ENCODE measurements at regions of chr1 and their contacts with region 1.

Region 1: DNA sequence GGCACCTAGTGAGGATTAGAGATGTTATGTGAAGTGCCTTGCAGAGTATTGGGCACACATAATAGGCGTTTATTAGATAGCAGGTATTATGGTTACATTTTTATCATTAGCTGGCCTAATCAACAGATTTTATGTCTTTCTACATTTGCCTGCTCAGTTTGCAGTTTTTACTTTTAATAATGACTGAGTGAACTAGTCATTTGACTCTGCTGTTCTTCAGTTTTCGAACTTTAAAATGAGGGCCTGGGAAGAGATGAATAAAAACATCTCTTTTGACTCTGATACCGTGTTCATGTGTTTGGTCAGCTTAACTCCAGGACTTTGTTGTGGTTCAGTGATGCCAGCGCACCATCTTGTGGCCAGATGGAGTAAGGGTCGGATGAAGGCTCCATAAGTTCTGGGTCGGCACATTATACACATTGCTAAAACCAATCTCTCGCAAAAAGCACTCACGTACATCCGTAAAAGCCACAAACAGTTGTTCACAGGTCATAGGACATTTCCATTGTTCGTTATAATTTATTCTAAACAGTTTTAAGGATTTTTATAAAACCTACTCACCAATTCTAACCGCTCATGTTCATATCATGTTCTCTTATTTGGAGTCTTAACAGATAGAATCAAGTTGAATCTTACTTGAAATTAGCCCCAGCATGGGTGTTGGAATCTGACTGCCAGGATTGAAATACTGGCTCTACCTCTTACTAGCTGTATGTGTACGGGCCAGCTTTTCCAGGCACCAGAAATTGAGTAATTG is 78.4 kb upstream of the GPR88 start:
- DNase-seq: peak; percentile 41 to 86 (median 62)
- ATAC-seq: peak; percentile 61
- H3K4me3 ChIP-seq: no peak overlapping the region
- H3K4me3 Mint-ChIP-seq: peak overlapping the region; percentile 62
- H3K27ac ChIP-seq: no peak overlapping the region
- H3K27ac Mint-ChIP-seq: peak overlapping the region; percentile 33
- H3K4me1 ChIP-seq: peaks cover 23% of the 10 kb centered on the region
- H3K4me1 Mint-ChIP-seq: peaks cover 83% of the 10 kb centered on the region
- H3K27me3 ChIP-seq: no peaks in the 10 kb centered on the region
- H3K27me3 Mint-ChIP-seq: no peaks in the 10 kb centered on the region
- CTCF ChIP-seq: peak; percentile 89

Region 2: DNA sequence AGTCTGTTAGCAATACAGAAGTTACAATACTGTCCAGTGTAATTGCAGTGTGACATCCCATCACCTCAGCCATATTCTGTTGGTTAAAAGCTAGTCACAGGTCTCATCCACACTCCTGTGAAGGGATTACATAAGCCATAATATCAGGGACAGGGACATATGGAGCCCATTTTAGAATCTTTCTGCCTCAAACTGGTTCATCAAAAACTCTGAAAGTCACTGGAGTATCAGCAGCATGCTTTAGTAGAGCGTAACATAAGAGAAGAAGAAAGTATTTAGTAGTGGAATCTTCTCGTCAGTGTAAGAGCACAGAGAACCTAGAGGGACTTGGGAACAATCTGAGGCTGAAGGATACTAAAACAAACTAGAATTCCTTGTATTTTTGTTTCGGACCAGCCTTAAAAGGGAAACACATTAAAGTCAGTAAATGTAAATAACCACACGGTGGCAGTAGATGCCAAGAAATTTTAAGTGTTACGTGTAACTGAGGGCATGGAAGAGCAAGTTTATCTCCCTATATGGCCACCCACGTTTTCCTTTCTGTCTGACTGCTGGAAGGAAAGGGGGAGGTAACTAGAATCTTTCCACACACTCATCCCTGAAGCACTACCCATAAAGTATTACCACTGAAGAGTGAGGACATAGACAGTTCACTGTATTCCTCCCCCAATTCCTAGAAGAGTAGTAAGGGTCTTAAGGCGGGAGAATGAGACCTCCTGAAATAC is 651.0 kb before region 1 on chr1:
- CTCF ChIA-PET with region 1: no interaction called
- POLR2A ChIA-PET with region 1: no interaction called
- intact Hi-C with region 1: loop called (anchors 5 kb)
- DNase-seq: peak in 6 of 14 experiments; percentile 3 to 80 (median 52)
- ATAC-seq: peak; percentile 86
- H3K4me3 ChIP-seq: no peak overlapping the region
- H3K4me3 Mint-ChIP-seq: no peak overlapping the region
- H3K27ac ChIP-seq: no peak overlapping the region
- H3K27ac Mint-ChIP-seq: no peak overlapping the region
- H3K4me1 ChIP-seq: no peaks in the 10 kb centered on the region
- H3K4me1 Mint-ChIP-seq: peaks cover 7% of the 10 kb centered on the region
- H3K27me3 ChIP-seq: peaks cover 5 to 21% of the 10 kb centered on the region in 2 experiments
- H3K27me3 Mint-ChIP-seq: peaks cover 14% of the 10 kb centered on the region
- CTCF ChIP-seq: peak; percentile 86

Region 3: GRCh38 chr1:100265931-100266740 is 193.4 kb before region 1 on chr1 and contains the start of gene RTCA:
- CTCF ChIA-PET with region 1: interaction called, 6 read pairs
- POLR2A ChIA-PET with region 1: interaction called, 5 read pairs
- intact Hi-C with region 1: loop called in 1 of 2 experiments (anchors 1 kb)
- DNase-seq: peak; percentile 88 to 98 (median 94)
- ATAC-seq: peak; percentile 95
- H3K4me3 ChIP-seq: peak within 1 kb of the TSS; percentile 96
- H3K4me3 Mint-ChIP-seq: peak within 1 kb of the TSS; percentile 99
- H3K27ac ChIP-seq: peak within 1 kb of the TSS; percentile 62 to 67
- H3K27ac Mint-ChIP-seq: peak within 1 kb of the TSS; percentile 93
- H3K4me1 ChIP-seq: peaks cover 41% of the 10 kb centered on the region
- H3K4me1 Mint-ChIP-seq: peaks cover 60% of the 10 kb centered on the region
- H3K27me3 ChIP-seq: no peaks in the 10 kb centered on the region
- H3K27me3 Mint-ChIP-seq: no peaks in the 10 kb centered on the region
- CTCF ChIP-seq: no peak
- total RNA-seq, gene RTCA: 62.1 to 67.1 TPM

Region 4: DNA sequence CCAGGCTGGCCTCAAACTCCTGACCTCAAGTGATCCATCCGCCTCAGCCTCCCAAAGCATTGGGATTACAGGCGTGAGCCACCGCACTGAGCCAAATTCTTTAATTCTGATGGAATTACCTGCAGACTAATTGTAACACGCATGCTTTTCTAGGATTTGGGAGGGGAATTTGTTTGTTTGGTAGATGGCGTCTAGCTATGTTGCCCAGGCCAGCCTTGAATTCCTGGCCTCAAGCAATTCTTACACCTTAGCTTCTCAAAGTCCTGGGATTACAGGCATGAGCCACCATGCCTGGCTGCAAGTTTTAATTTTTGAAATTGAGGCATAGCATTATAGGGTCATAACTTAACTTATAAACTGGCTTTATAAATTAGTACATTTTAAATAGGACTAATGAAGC is 174.9 kb before region 1 on chr1:
- CTCF ChIA-PET with region 1: interaction called, 14 read pairs
- POLR2A ChIA-PET with region 1: interaction called, 3 read pairs
- intact Hi-C with region 1: loop called in 1 of 2 experiments (anchors 2 kb)
- DNase-seq: no peak
- ATAC-seq: no peak
- H3K4me3 ChIP-seq: no peak overlapping the region
- H3K4me3 Mint-ChIP-seq: no peak overlapping the region
- H3K27ac ChIP-seq: no peak overlapping the region
- H3K27ac Mint-ChIP-seq: no peak overlapping the region
- H3K4me1 ChIP-seq: no peaks in the 10 kb centered on the region
- H3K4me1 Mint-ChIP-seq: peaks cover 15% of the 10 kb centered on the region
- H3K27me3 ChIP-seq: no peaks in the 10 kb centered on the region
- H3K27me3 Mint-ChIP-seq: no peaks in the 10 kb centered on the region
- CTCF ChIP-seq: no peak

Region 5: DNA sequence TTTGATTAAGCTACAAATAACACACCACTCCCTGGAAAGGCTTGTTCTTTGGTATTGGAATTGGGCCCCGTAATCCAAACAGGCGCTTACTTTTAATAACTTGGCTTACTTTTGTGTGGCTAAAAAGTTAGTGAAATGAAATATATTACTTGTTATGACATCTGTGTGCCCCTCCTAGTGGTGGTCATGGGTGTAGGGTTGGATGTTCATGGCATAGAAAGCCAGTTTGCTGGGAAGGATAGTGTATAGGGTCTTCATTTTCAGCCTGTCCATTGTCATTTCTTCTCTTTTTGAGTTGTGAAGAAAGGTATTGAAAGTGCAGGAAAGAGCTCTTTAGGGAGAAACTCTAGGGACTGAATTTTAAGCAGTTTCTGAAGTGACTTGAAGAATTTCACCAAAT is 101.3 kb before region 1 on chr1:
- CTCF ChIA-PET with region 1: interaction called, 40 read pairs
- POLR2A ChIA-PET with region 1: interaction called, 44 read pairs
- intact Hi-C with region 1: loop called (anchors 2 to 5 kb)
- DNase-seq: peak in 7 of 14 experiments; percentile 6 to 60 (median 20)
- ATAC-seq: peak; percentile 40
- H3K4me3 ChIP-seq: peak overlapping the region; percentile 8
- H3K4me3 Mint-ChIP-seq: peak overlapping the region; percentile 73
- H3K27ac ChIP-seq: no peak overlapping the region
- H3K27ac Mint-ChIP-seq: peak overlapping the region; percentile 37
- H3K4me1 ChIP-seq: peaks cover 63% of the 10 kb centered on the region
- H3K4me1 Mint-ChIP-seq: peaks cover 95% of the 10 kb centered on the region
- H3K27me3 ChIP-seq: no peaks in the 10 kb centered on the region
- H3K27me3 Mint-ChIP-seq: no peaks in the 10 kb centered on the region
- CTCF ChIP-seq: peak; percentile 54

Region 6: GRCh38 chr1:100400404-100400803 is 59.1 kb before region 1 on chr1:
- CTCF ChIA-PET with region 1: interaction called, 10 read pairs
- POLR2A ChIA-PET with region 1: interaction called, 11 read pairs
- intact Hi-C with region 1: no loop called
- DNase-seq: peak; percentile 54 to 91 (median 68)
- ATAC-seq: peak; percentile 91
- H3K4me3 ChIP-seq: peak overlapping the region; percentile 15
- H3K4me3 Mint-ChIP-seq: peak overlapping the region; percentile 81
- H3K27ac ChIP-seq: peak overlapping the region; percentile 51
- H3K27ac Mint-ChIP-seq: peak overlapping the region; percentile 85
- H3K4me1 ChIP-seq: peaks cover 62% of the 10 kb centered on the region
- H3K4me1 Mint-ChIP-seq: peaks cover 94% of the 10 kb centered on the region
- H3K27me3 ChIP-seq: no peaks in the 10 kb centered on the region
- H3K27me3 Mint-ChIP-seq: no peaks in the 10 kb centered on the region
- CTCF ChIP-seq: no peak

Region 7: DNA sequence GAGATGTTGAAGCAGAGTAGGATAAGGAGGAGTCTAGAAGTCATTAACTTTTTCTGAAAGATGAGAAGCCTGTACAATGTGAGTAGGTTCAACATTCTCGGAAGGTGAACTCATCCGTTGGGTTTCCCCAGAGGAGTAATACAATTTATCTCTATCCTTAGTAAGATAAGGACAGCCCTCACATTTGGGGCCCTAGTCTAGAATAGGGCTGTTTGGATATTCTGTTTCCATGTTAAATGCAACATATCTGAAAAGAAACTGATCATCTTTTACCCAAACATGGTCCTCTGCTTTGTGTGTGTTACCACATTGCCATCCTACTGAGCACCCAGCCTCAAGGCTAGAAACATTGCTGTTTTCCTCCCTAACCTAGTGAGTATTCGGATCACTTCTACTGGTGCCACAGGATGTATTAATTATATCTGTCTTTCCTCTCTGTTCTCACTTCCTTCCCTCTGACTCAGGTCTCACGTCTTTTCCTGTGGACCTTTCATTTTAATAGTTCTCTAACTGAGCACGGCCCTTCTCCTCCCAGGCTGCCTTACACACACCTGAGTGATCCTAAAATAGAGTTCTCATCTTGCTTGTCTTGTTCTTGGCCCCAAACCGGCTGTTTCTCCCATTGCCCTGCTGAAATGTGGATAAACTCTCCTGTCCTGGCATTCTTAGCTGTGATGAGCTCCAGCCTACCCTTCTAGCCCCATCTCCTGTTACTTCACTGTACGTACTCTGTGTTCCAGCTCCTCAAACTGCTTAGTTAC is 15.5 kb before region 1 on chr1:
- CTCF ChIA-PET with region 1: interaction called, 14 read pairs
- POLR2A ChIA-PET with region 1: interaction called, 13 read pairs
- intact Hi-C with region 1: loop called in 1 of 2 experiments (anchors 2 kb)
- DNase-seq: peak in 4 of 14 experiments; percentile 46 to 84 (median 68)
- ATAC-seq: peak; percentile 25
- H3K4me3 ChIP-seq: peak overlapping the region; percentile 16
- H3K4me3 Mint-ChIP-seq: peak overlapping the region; percentile 63
- H3K27ac ChIP-seq: peak overlapping the region; percentile 95 to 98
- H3K27ac Mint-ChIP-seq: peak overlapping the region; percentile 94
- H3K4me1 ChIP-seq: peaks cover 61% of the 10 kb centered on the region
- H3K4me1 Mint-ChIP-seq: peaks cover 93% of the 10 kb centered on the region
- H3K27me3 ChIP-seq: no peaks in the 10 kb centered on the region
- H3K27me3 Mint-ChIP-seq: no peaks in the 10 kb centered on the region
- CTCF ChIP-seq: no peak

Region 8: DNA sequence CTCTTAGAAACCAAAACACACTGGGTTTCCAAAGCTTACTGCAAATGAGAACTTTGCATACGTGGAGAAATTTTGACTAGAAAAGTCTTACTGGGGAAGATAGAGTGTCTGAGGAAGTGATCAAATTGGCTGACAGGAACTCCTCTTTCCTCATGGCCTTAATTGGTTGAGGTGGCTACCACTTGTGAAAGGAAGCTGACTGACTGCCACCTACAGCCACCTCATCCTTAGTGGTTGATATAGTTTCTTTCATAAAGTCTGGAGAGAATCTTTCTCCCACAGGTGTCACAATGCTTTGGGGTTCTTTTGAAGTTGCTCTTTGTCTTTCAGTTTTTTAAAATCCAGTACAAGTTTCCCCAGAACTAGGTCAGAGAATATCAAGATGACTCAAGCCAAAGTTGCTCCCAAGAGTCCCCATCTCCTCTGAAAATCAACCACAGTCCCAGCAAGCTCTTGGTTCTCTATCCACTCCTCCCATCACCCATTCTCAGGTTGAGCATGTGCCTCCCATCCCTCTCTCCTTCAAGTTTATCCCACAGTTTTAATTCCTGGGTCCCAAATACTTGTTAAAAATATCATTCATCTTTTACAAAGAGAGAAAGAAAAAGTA is 121.7 kb after region 1 on chr1:
- CTCF ChIA-PET with region 1: no interaction called
- POLR2A ChIA-PET with region 1: no interaction called
- intact Hi-C with region 1: no loop called
- DNase-seq: peak in 2 of 14 experiments; percentile 12 to 51
- ATAC-seq: no peak
- H3K4me3 ChIP-seq: no peak overlapping the region
- H3K4me3 Mint-ChIP-seq: no peak overlapping the region
- H3K27ac ChIP-seq: no peak overlapping the region
- H3K27ac Mint-ChIP-seq: no peak overlapping the region
- H3K4me1 ChIP-seq: no peaks in the 10 kb centered on the region
- H3K4me1 Mint-ChIP-seq: no peaks in the 10 kb centered on the region
- H3K27me3 ChIP-seq: no peaks in the 10 kb centered on the region
- H3K27me3 Mint-ChIP-seq: no peaks in the 10 kb centered on the region
- CTCF ChIP-seq: no peak